HepG2 (cell line): ENCODE measurements at regions of chr2 and their contacts with region 1.

Region 1: GRCh38 chr2:159615140-159615951 is 1.0 kb downstream of the BAZ2B start:
- DNase-seq: peak; percentile 90
- ATAC-seq: peak; percentile 94
- H3K4me3 ChIP-seq: peak overlapping the region; percentile 76 to 100 (median 90)
- H3K27ac ChIP-seq: peak overlapping the region; percentile 99
- H3K4me1 ChIP-seq: peaks cover 46% of the 10 kb centered on the region
- H3K27me3 ChIP-seq: no peaks in the 10 kb centered on the region; a peak in 1 of 5 replicates
- CTCF ChIP-seq: no peak
- EP300 ChIP-seq: peak; percentile 39 to 59; a peak in 1 of 4 replicates
- POLR2A ChIP-seq: peak; percentile 79 to 87
- RAD21 ChIP-seq: no peak

Region 2: DNA sequence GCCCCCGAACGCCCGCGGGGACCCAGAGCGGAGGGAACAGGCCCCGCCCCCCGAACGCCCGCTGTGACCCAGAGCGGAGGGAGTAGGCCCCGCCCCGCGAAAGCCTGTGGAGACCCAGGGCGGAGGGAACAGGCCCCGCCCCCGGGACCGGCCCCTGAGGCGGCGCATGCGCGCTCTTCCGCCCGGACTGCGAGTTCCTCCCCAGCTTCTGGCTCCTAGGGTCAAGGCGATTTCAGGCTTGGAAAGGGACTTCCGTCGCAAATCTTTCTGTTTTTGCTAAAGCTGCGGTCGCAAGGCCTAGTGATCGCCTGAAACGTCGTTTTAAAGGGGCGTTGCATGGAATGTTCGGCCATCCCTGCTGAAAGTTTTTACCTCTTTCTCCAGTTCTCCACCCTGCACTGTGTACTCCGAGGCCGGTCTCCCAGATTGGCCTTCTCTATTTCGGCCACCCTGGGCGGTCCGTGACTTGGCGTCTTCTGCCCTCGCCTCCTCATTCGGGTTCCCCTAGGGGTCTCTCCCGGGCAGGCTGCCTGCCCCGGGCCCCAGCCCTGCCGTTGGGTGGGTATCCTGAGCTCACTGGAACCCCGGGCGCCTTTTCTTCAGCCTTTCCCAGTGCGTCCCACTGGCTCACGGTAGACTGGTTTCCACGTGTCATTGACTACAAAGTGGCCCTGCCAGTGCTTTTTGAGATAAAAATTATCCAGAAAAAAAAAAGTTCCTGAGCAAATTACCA is 328.5 kb before region 1 on chr2:
- CTCF ChIA-PET with region 1: no interaction called
- POLR2A ChIA-PET with region 1: interaction called, 13 read pairs
- in situ Hi-C with region 1: no loop called
- intact Hi-C with region 1: loop called (anchors 1 kb)
- DNase-seq: peak; percentile 97
- ATAC-seq: peak; percentile 91
- H3K4me3 ChIP-seq: peak overlapping the region; percentile 67 to 93 (median 73)
- H3K27ac ChIP-seq: peak overlapping the region; percentile 96
- H3K4me1 ChIP-seq: peaks cover 39% of the 10 kb centered on the region
- H3K27me3 ChIP-seq: no peaks in the 10 kb centered on the region; a peak in 1 of 5 replicates
- CTCF ChIP-seq: peak; percentile 34; the same call in 1 of the 2 replicates
- EP300 ChIP-seq: peak in 1 of 2 experiments; percentile 8; a peak in 1 of 4 replicates
- POLR2A ChIP-seq: peak; percentile 92 to 96
- RAD21 ChIP-seq: peak; percentile 49; the same call in 1 of the 2 replicates

Region 3: GRCh38 chr2:159797543-159798375 is 182.4 kb after region 1 on chr2 and contains the start of gene CD302:
- CTCF ChIA-PET with region 1: no interaction called
- POLR2A ChIA-PET with region 1: interaction called, 4 read pairs
- in situ Hi-C with region 1: no loop called
- intact Hi-C with region 1: loop called (anchors 10 kb)
- DNase-seq: peak; percentile 68
- ATAC-seq: peak; percentile 89
- H3K4me3 ChIP-seq: peak within 1 kb of the TSS; percentile 69 to 92 (median 74)
- H3K27ac ChIP-seq: peak within 1 kb of the TSS; percentile 79
- H3K4me1 ChIP-seq: peaks cover 43% of the 10 kb centered on the region
- H3K27me3 ChIP-seq: no peaks in the 10 kb centered on the region
- CTCF ChIP-seq: no peak
- EP300 ChIP-seq: 0 out of 4 replicates have a peak, but pooled peaks of 1 of the 2 experiments have one; percentile 45
- POLR2A ChIP-seq: peak; percentile 55 to 56; a peak in 3 of 4 replicates
- RAD21 ChIP-seq: peak; percentile 51; the same call in 1 of the 2 replicates
- total RNA-seq, gene CD302: 5.6 and 8.0 TPM in 2 replicates